AG04449 (cell line): ENCODE measurements at regions of chr17 and their contacts with region 1.

Region 1: DNA sequence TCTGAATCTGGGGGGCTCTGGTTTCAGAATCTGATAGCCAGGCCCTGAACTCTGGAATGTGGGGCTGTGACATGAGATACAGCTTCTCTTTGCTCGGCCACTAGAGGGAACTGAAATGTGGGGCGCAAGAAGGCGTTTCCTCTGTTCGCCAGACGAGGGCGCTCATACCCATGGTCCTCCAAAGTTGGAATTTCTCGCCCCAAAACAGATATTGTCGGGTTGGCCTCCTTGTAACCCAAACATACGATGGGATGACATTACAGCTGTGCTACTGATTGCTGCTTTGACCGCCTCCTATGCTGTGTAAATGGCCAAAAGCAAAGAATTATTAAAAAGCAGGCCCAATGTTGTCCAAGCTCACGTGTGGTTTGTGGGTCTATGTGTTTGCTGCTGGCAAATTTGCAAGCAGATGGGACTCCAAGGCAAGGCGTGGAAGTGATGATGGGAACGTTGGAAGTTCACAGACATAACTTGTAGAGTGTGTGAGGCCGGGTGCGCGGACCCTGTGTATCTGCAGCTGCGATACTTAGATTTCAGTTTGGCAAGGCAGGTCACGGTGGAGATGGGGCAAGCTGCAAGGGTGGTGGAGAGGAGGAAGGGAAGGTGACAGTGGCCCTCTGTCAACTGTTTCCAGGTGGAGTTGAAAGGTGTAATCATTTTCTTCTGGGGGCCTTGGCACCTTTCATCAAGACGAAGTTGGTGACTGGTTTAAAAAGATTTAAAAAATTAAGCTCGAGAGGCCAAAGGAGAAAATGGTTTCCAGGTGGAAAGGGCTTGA is 13.0 kb upstream of the MSI2 start:
- DNase-seq: peak; percentile 1
- H3K4me3 ChIP-seq: no peak overlapping the region
- CTCF ChIP-seq: peak; percentile 99

Region 2: GRCh38 chr17:57228911-57229310 is 14.4 kb before region 1 on chr17:
- CTCF ChIA-PET with region 1: interaction called, 11 read pairs
- POLR2A ChIA-PET with region 1: no interaction called
- DNase-seq: no peak
- H3K4me3 ChIP-seq: no peak overlapping the region
- CTCF ChIP-seq: no peak

Region 3: GRCh38 chr17:57468932-57469775 is 225.8 kb after region 1 on chr17:
- CTCF ChIA-PET with region 1: interaction called, 15 read pairs
- POLR2A ChIA-PET with region 1: no interaction called
- DNase-seq: no peak
- H3K4me3 ChIP-seq: no peak overlapping the region
- CTCF ChIP-seq: no peak

Region 4: GRCh38 chr17:57518587-57519581 is 275.5 kb after region 1 on chr17:
- CTCF ChIA-PET with region 1: interaction called, 26 read pairs
- POLR2A ChIA-PET with region 1: no interaction called
- DNase-seq: peak; percentile 33
- H3K4me3 ChIP-seq: no peak overlapping the region
- CTCF ChIP-seq: no peak

Region 5: DNA sequence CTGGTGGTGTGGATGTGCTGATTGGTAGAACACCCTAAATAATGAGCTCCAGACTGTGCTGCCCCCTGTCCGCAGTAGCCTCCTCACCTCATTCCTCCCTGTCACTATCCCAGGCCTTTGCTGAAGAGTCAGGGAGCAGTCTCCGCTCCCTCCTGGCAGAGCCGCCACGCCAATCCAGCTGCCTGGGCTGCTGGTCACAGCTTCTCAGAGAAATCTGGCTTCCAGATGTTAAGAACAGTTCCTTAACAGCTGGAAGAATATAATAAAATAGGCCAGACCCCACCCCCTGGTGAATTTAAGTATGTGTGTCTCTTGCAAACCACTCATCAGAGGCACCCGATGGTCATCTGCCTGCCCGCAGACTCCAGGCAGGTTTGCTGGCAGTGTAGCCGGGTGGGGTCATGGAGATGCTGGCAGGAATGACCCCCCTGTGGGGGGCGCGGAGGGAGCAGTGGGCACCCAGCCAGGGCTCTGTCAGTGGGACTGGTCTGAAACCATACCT is 340.7 kb after region 1 on chr17:
- CTCF ChIA-PET with region 1: interaction called, 12 read pairs
- POLR2A ChIA-PET with region 1: no interaction called
- DNase-seq: no peak
- H3K4me3 ChIP-seq: no peak overlapping the region
- CTCF ChIP-seq: no peak

Region 6: DNA sequence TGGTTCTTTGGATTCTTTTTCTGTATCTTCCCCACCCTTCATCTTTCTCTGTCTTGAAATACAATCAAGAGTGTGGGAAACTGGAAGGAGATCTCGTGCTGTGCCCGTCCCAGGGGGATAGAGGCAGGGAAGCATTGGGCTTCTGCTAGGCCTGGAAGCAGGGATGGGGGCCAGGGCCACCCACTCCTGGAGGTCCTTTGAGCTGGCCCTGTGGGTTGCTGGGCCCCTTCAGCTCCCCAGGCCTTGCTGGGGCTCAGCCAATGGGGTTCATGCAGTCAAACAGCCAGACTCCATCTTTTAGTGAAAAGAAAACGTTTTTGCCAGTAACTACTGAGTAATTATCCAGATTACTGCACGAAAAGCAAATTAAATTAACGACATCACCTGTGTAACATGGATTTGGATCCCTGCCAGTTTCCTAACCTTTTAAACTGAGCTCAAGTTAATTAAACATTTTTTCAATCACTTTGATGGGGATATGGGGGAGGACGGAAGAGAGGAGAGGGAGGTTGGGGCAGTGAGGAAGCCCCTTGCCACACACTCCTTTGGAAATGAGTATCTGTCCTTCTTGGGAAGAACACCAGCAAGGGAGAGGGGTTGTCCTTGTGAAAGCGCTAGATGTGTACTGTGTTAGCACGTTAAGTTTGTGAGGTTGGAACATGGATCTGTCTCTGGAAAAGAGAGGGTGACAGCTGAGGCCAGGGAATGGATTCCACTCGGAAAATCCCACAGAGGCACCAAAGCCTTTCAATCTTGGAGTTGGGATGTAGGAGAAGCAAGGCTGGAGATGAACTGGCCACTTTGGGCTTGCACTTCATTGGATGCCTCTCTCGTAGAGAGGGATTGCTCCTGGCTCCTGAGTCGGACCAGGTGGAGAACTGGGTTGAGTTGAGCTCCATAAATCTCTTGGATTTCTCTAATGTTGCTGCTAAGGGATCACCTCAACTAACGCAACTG is 434.2 kb after region 1 on chr17:
- CTCF ChIA-PET with region 1: interaction called, 119 read pairs
- POLR2A ChIA-PET with region 1: no interaction called
- DNase-seq: no peak
- H3K4me3 ChIP-seq: no peak overlapping the region
- CTCF ChIP-seq: no peak

Region 7: DNA sequence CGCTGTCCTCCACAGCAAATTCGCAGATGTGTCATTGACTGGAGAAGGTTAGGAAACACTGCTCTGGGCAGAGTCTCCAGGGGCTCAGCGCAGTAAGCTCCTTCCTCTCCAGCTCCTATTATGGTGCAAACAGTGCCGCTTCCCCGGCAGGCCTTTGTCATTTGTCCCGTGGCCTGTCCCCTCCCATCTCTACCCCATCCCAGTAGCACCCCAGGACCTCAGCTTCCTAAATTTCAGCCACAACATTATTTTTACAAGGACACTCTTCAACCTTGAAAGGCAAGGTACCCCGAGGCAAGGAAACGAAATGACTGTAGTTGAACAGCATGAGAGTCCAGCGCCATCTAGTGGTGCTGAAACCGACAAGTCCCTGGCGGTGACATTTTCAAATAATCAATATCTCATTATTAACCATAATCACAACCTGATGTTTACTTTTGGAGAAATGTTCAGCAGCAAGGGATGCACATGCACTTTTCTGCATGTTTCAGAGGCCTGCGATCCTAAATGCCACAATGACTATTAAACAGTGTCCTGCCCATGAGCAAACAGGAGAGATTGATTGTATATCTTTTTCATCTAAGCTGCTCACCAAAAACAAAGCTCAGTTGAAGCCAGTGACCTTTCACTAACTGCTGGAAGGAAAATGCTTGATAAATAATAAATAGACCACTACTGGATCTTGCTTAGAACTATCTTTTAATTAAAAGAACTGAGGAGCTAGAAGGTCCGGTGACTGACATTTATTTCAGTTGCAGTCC is 590.0 kb after region 1 on chr17:
- CTCF ChIA-PET with region 1: interaction called, 29 read pairs
- POLR2A ChIA-PET with region 1: no interaction called
- DNase-seq: no peak
- H3K4me3 ChIP-seq: peak overlapping the region; percentile 58
- CTCF ChIP-seq: peak; percentile 78